Esophagus muscularis mucosa (tissue), 4 donors: ENCODE measurements at regions of chr16 and their contacts with region 1.

Region 1: DNA sequence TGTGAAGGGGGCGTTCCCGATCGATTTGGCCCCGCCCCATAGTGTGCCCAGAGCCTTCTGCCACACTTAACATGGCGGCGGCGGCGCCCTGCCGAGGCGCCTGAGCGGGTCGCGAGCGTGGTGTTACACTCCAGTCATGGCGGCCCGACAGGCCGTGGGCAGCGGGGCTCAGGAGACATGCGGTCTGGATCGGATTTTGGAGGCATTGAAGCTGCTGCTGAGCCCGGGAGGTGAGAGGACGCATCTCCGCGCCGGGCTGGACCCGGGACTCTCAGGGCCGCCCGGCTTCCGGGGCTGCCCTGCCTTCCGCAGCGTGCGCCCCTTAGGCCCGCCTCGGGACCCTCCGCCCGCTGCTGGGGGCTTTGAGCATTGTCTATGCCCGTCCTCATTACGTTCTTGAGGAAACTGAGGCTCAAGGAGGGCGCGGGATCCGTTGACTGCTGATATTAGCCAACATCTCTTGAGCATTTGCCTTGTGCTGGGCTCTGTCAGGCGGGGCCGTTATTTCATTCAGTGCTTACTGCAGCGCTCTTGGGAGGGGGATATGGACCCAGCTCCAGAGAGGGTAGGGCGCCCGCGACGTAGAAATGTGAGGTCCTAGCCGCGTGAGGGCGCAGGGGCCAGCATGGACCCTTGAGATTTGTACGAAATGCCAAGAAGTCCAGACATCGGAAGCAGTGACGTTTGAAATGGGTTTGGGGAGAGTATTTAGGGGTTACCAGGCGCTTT is at the start of gene TANGO6:
- DNase-seq: peak; percentile 97
- H3K4me3 ChIP-seq: peak within 1 kb of the TSS; percentile 71 to 93 (median 87)
- H3K27ac ChIP-seq: peak within 1 kb of the TSS; percentile 83 to 91 (median 86)
- H3K4me1 ChIP-seq: peaks cover 0 to 22% (median 20%) of the 10 kb centered on the region in 4 donors
- H3K27me3 ChIP-seq: no peaks in the 10 kb centered on the region
- CTCF ChIP-seq: no peak
- EP300 ChIP-seq: no peak
- POLR2A ChIP-seq: no peak
- total RNA-seq, gene TANGO6: 15.7 to 21.3 (median 18.3) TPM

Region 2: GRCh38 chr16:68538880-68539701 is 304.6 kb before region 1 on chr16 and contains the start of gene ZFP90:
- intact Hi-C with region 1: loop called (anchors 10 kb)
- DNase-seq: peak; percentile 92
- H3K4me3 ChIP-seq: peak within 1 kb of the TSS; percentile 82 to 100 (median 97)
- H3K27ac ChIP-seq: peak within 1 kb of the TSS; percentile 76 to 84 (median 82)
- H3K4me1 ChIP-seq: peaks cover 7 to 12% (median 9%) of the 10 kb centered on the region in 4 donors
- H3K27me3 ChIP-seq: no peaks in the 10 kb centered on the region
- CTCF ChIP-seq: no peak
- EP300 ChIP-seq: no peak
- POLR2A ChIP-seq: no peak
- total RNA-seq, gene ZFP90: 27.8 to 31.0 (median 29.5) TPM

Region 3: GRCh38 chr16:68902008-68902968 is 58.6 kb after region 1 on chr16:
- intact Hi-C with region 1: loop called (anchors 10 kb)
- DNase-seq: no peak
- H3K4me3 ChIP-seq: no peak overlapping the region
- H3K27ac ChIP-seq: peak overlapping the region in 3 of 4 donors; percentile 35 to 60 (median 56)
- H3K4me1 ChIP-seq: peaks cover 0 to 21% (median 16%) of the 10 kb centered on the region in 4 donors
- H3K27me3 ChIP-seq: no peaks in the 10 kb centered on the region
- CTCF ChIP-seq: peak; percentile 64 to 67 (median 67)
- EP300 ChIP-seq: no peak
- POLR2A ChIP-seq: no peak